Pancreas (tissue), 10 donors: ENCODE measurements at regions of chr2 and their contacts with region 1.

Region 1: DNA sequence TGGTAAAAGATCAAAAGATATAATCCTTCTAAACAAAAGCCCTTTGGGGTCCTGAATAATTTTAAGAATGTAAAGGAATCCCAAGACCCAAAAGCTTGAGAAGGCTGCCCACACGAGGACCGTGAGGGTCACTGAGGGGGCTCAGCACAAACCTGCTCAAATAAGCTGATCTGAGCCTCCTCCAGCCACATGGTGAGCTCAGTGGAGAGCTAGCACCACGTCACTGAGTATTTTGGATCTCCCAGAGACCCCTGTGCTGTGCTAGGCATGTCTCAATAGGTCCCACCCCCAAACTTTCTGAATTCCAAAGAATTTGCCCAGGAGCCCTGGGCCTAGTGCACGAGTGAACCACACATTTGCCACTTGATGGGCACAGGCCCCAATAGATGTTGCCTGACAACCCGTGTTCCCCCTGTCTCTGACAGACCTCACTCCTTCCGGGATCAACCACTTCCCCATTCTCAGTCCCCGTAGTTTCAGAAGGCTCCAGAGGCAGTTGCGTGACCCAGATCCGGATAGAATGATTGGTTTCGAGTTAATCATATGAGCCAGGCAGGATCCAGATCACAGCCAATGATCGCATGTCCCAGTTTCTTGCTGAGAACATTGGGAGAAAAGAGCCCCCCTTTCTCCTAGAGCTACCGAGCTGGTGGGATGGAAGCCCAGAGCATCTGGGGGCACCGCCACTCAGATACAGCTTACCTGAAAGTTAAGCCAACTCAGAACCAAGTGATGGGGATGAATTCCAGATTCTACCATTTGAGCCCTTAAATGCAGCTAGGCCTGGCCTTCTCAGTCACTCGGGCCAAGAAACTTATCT is 203.8 kb downstream of the TNS1 start:
- DNase-seq: peak in 3 of 6 donors; percentile 2 to 46 (median 9)
- ATAC-seq: peak in 2 of 4 donors; percentile 36 to 54
- H3K4me3 ChIP-seq: no peak overlapping the region
- H3K27ac ChIP-seq: no peak overlapping the region
- H3K4me1 ChIP-seq: peaks cover 0 to 3% (median 0%) of the 10 kb centered on the region in 3 donors
- H3K27me3 ChIP-seq: no peaks in the 10 kb centered on the region
- CTCF ChIP-seq: no peak

Region 2: GRCh38 chr2:218033590-218034496 is 234.9 kb after region 1 on chr2:
- intact Hi-C with region 1: loop called in 2 of 3 experiments (anchors 5 to 10 kb)
- DNase-seq: peak in 3 of 6 donors; percentile 12 to 77 (median 59)
- ATAC-seq: no peak
- H3K4me3 ChIP-seq: peak overlapping the region in 1 of 4 donors; percentile 14
- H3K27ac ChIP-seq: no peak overlapping the region
- H3K4me1 ChIP-seq: peaks cover 0 to 3% (median 0%) of the 10 kb centered on the region in 3 donors
- H3K27me3 ChIP-seq: no peaks in the 10 kb centered on the region
- CTCF ChIP-seq: no peak